Esophagus muscularis mucosa (tissue), 4 donors: ENCODE measurements at regions of chrX and their contacts with region 1.

Region 1: DNA sequence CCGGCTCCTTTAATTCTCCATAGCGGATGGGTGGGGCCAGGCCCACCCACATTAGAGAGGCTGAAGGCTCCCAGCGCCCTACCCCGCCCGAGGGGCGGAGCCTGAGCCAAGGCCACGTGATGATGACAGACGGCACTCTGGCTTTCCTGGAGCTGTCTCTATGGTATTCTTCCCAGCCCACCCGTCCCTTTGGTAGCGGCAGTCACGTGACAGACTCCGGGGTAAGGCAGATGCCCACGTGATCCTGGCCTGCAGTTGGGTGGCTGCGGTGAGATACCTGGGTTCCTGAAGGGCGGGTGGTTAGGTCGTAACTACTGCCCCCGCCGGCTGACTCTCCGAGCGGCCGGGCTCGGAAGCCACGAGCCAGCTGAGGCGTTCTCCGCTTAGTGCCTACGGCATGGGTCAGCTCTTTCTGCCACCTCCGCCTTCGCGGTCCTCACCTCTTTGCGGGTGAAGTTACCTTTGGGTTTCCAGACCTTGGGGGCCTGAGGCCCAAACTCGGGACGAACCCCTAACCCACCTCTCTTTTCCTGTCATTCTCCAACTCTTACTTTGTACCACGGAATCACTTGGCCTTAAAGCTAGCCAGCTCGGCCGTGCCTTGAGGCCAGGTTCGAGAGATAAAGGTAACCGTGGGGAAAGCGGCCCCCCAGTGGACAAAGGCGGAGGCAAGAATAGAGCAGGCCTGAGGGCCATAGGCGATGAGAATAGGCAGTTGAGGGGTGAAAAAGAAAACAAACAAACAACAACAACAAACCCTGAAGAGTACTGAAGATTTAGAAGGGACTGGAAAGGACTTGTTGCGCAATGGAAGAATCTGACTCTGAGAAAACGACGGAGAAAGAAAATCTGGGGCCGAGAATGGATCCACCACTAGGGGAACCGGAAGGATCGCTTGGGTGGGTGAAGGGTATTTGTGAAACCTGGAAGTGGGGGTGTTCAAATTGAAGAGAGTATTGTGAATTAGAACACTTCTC is at the start of gene RRAGB:
- DNase-seq: peak; percentile 97
- H3K4me3 ChIP-seq: peak within 1 kb of the TSS; percentile 62 to 71 (median 64)
- H3K27ac ChIP-seq: peak within 1 kb of the TSS; percentile 80 to 89 (median 86)
- H3K4me1 ChIP-seq: peaks cover 0 to 26% (median 12%) of the 10 kb centered on the region in 4 donors
- H3K27me3 ChIP-seq: no peaks in the 10 kb centered on the region
- CTCF ChIP-seq: peak; percentile 47 to 54 (median 51)
- EP300 ChIP-seq: no peak
- POLR2A ChIP-seq: no peak
- total RNA-seq, gene RRAGB: 17.2 to 24.9 (median 19.4) TPM

Region 2: DNA sequence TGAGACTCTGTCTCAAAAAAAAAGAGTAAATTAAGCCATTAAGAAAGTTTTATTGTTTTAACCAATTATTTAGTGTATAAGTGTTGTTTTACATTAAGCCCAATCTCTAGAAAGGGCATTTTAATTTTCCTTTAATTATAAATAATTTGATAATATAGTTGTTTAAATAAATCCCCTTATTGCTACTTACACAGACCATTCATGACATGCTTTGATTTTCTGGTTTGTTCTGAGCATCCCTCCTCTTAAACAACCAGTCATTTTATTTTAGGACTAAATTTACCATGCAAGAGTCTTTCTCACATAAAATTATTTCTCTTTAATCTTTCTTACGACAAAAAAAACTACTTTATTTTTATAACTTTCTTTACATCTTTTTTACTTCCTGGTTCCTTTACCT is 521.1 kb before region 1 on chrX:
- intact Hi-C with region 1: no loop called
- DNase-seq: no peak
- H3K4me3 ChIP-seq: no peak overlapping the region
- H3K27ac ChIP-seq: no peak overlapping the region
- H3K4me1 ChIP-seq: no peaks in the 10 kb centered on the region
- H3K27me3 ChIP-seq: no peaks in the 10 kb centered on the region
- CTCF ChIP-seq: no peak
- EP300 ChIP-seq: no peak
- POLR2A ChIP-seq: no peak

Region 3: GRCh38 chrX:55818687-55819375 is 101.0 kb after region 1 on chrX:
- intact Hi-C with region 1: no loop called
- DNase-seq: no peak
- H3K4me3 ChIP-seq: no peak overlapping the region
- H3K27ac ChIP-seq: no peak overlapping the region
- H3K4me1 ChIP-seq: no peaks in the 10 kb centered on the region
- H3K27me3 ChIP-seq: no peaks in the 10 kb centered on the region
- CTCF ChIP-seq: no peak
- EP300 ChIP-seq: no peak
- POLR2A ChIP-seq: no peak

Region 4: DNA sequence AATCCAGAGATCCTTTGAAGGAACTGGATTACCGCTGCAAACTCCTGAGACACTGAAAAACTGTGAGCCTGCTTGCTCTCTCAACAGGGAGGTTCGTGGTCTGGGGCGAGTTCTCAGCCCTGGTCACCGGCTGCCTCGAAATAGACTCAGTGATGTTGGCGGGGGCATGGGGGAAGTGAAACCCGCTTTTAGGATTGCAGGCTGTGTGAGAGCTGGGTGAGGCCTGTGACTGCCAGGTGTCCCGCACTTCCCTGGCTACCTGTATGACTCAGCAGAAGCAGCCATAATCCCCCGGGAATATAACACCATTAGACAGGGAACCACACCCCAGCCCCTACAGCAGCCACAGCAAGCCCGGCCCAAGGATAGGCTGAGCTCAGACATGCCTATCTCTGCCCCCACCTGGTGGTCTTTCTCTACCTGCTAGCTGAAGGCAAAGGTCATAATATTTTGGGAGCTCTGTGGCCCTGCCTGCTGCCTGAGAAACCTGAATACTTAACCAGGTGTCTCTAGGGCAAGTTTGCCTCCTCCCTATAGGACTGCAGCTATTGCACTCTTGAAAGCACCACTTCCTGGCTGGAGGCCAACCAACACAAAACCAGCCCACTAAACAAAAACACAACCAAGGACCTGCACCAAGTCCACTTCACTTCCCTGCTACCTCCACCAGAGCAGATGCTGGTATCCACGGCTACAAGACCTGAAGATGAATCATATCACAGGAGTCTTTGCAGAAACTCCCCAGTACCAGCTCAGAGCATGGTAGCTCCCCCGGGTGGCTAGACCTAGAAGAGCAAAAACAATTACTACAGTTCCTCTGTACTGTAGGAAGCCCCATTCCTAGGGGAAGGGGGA is 201.8 kb after region 1 on chrX:
- intact Hi-C with region 1: loop called (anchors 10 kb)
- DNase-seq: no peak
- H3K4me3 ChIP-seq: no peak overlapping the region
- H3K27ac ChIP-seq: no peak overlapping the region
- H3K4me1 ChIP-seq: no peaks in the 10 kb centered on the region
- H3K27me3 ChIP-seq: no peaks in the 10 kb centered on the region
- CTCF ChIP-seq: no peak
- EP300 ChIP-seq: no peak
- POLR2A ChIP-seq: no peak